ENCODE measurements at regions of chr7 and their contacts with region 1.

Region 1: GRCh38 chr7:4641667-4642467 is 40.2 kb upstream of the FOXK1 start:
- DNase-seq: peak; percentile 92 to 98 (median 95)
- ATAC-seq: peak; percentile 92 to 98 (median 96)
- H3K4me3 ChIP-seq: peak overlapping the region; percentile 15 to 77 (median 64)
- H3K27ac ChIP-seq: peak overlapping the region; percentile 61 to 93 (median 86)
- H3K4me1 ChIP-seq: peaks cover 0 to 15% (median 9%) of the 10 kb centered on the region in 12 donors
- H3K27me3 ChIP-seq: no peaks in the 10 kb centered on the region
- CTCF ChIP-seq: peak in 11 of 12 donors; percentile 10 to 79 (median 55)
- POLR2A ChIP-seq: peak in 1 of 2 donors; percentile 50

Region 2: DNA sequence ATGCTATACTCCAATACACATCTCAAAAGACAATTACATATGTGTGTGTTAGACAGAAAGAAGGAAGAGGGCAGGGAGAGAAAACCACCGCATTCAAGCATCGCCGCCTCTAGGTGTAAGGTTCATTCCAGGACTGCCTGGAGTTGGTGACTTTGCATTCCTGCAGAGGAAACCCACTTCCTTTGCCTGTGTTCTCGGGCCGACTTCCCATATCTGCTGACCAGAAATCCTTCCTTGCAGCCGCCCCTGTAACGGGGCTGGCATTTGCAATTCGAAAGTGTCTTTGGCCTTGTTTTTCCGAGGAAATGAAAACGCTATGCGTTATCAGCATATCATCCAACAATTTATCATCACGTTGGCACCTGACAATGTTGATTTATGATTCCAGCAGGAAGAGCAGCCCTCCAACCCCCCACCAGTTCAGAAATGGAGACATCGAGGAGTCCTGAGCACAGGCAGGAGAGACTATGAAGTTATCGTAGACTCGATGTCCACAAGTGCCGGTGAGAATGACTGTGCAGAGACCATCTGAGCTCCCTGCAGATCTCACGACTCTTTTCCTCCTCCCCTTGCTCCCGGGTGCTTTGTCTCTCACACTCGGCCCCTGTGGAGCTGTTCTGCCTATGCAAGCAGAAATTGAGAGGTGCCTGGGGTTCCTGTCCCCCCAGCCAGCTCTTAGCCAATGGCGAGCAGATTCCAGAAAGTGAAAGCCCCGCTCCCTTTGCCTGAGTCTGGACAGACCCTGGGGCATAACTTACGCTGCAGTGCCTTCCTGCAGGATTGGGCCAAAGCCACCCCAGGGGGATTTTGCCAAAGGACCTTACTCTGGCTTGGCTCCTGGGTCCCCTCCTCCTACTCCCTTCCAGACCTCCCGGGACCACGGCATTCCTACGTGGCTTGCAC is 28.7 kb before region 1 on chr7:
- intact Hi-C with region 1: no loop called
- DNase-seq: peak in 4 of 5 donors; percentile 38 to 55 (median 41)
- ATAC-seq: peak; percentile 39 to 82 (median 60)
- H3K4me3 ChIP-seq: peak overlapping the region in 11 of 12 donors; percentile 22 to 54 (median 38)
- H3K27ac ChIP-seq: peak overlapping the region in 11 of 12 donors; percentile 54 to 82 (median 73)
- H3K4me1 ChIP-seq: peaks cover 0 to 20% (median 9%) of the 10 kb centered on the region in 12 donors
- H3K27me3 ChIP-seq: no peaks in the 10 kb centered on the region
- CTCF ChIP-seq: no peak
- POLR2A ChIP-seq: no peak

Region 3: DNA sequence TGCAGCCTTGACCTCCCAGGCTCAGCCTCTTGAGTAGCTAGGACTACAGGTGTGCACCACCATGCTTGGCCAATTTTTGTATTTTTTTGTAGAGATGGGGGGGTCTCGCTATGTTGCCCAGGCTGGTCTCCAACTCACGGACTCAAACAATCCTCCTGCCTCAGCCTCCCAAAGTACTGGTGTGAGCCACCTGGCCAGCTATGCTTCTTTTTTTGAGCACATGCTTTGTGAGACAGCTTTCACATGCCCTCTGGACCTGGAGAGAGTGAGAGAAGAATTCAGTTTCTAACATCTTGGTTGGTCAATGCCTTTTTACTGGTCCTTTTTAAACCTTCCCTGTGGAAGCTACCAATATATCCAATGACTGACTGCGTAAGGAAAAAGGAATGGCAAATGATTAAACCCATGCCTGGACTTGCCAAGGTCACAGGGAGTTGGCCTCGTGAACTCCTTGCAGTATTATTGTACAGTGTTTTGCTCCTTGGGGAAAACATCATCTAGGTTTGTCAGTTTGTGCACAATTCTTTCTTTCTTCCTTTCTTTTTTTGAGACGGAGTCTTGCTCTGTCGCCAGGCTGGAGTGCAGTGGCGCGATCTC is 34.0 kb after region 1 on chr7:
- intact Hi-C with region 1: loop called in 6 of 10 experiments (anchors 2 to 5 kb)
- DNase-seq: no peak
- ATAC-seq: no peak
- H3K4me3 ChIP-seq: no peak overlapping the region
- H3K27ac ChIP-seq: no peak overlapping the region
- H3K4me1 ChIP-seq: no peaks in the 10 kb centered on the region
- H3K27me3 ChIP-seq: no peaks in the 10 kb centered on the region
- CTCF ChIP-seq: no peak
- POLR2A ChIP-seq: no peak

Region 4: DNA sequence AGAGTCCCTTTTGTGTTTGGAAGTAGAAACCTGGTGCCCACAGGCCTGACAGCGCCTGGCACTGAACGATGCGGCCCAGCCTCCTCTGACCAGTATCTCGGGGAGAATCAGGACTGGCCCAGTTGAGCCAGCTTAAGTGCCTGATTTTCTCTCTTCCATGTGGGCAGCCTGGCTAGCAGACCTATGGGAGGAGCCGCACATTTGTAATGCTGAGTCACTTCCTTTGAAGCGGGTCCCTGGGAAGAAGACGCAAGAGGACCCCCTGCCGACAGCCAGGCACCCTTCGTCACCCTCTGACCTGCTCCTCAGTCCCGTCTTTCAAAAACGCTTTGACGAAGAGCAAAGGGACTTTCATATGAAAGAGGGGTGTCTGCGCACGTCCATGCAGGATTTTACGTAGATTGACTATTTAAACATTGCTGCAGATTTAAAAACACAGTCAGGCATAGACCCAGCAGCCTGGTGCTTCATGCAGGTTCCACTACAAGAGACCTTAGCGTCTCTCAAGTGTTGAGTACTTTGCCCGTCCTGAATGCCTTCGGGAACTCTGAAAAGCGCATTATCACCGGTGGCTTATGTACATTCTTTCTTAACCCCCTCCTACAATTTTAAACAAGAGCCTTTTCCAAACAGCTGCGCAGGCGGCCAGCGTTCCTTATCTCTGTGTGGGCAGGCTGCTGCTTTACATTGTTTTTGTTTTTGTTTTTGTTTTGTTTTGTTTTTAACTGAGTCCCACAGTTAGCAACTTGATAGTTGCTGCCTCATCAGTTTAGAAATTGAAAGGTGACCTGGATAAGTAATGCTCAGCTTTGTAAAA is 97.1 kb after region 1 on chr7:
- intact Hi-C with region 1: loop called in 4 of 10 experiments (anchors 2 to 5 kb)
- DNase-seq: peak in 3 of 5 donors; percentile 51 to 73 (median 60)
- ATAC-seq: peak in 3 of 4 donors; percentile 60 to 69 (median 68)
- H3K4me3 ChIP-seq: peak overlapping the region in 11 of 12 donors; percentile 16 to 46 (median 37)
- H3K27ac ChIP-seq: peak overlapping the region; percentile 31 to 86 (median 77)
- H3K4me1 ChIP-seq: peaks cover 0 to 58% (median 36%) of the 10 kb centered on the region in 12 donors
- H3K27me3 ChIP-seq: no peaks in the 10 kb centered on the region
- CTCF ChIP-seq: no peak
- POLR2A ChIP-seq: no peak

Measured in heart left ventricle (tissue), 16 donors.